A549 (cell line): ENCODE measurements at regions of chr14 and their contacts with region 1.

Region 1: DNA sequence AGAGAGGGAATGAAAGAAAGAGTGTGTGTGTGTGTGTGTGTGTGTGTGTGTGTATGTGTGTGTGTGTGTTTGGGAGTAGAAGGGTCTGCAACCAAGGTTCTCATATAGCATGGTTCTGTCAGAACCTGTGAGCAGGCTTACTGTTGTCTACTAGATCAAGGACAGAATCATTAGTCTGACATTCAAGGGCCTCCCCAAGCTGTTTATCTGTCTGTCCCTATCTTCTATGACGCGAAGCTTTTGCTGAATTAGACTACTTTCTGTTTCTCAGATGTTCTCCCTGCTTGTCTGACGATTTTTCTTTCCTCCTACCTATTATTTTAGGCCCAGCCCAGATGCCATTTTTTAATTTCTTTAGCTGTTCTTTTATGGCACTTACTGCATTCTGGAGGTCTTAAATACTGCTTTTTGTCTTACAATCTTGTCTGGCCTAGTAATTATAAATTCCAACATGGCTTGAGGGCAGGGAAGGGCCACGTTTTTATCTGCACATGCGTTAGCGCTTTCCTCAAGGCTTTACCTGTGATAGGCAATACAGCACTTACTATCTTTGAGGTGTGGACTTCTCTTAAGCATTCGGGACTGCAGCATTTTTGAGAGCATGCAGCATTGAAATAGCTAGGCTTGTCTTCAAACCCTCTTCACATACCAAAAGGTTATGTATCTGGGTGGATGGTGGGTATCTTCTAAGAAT is 150.2 kb downstream of the TTLL5 start:
- DNase-seq: no peak
- ATAC-seq: no peak
- H3K4me3 ChIP-seq: no peak overlapping the region
- H3K27ac ChIP-seq: no peak overlapping the region
- H3K4me1 ChIP-seq: no peaks in the 10 kb centered on the region
- CTCF ChIP-seq: no peak
- EP300 ChIP-seq: no peak
- POLR2A ChIP-seq: no peak
- RAD21 ChIP-seq: no peak

Region 2: DNA sequence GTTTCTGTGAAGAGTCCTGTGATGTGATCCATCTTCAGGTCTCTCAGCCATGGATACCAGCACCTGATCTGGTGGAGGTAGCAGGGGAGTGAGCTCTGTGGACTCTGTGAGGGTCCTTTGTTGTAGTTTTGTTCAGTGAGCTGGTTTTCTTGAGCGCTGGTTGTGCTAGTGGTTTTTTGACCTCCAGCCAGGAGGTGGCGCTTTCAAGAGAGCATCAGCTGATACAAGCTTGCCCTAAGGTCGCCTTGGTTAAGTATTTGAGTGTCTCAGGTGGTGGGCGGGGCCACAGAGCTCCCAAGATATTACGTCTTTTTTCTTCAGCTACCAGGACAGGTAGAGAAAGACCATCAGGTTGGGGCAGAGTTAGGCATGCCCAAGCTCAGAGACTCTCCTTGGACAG is 10.5 kb before region 1 on chr14:
- CTCF ChIA-PET with region 1: interaction called, 10 read pairs
- POLR2A ChIA-PET with region 1: no interaction called
- DNase-seq: peak in 1 of 2 experiments; percentile 4
- ATAC-seq: no peak
- H3K4me3 ChIP-seq: no peak overlapping the region
- H3K27ac ChIP-seq: no peak overlapping the region
- H3K4me1 ChIP-seq: no peaks in the 10 kb centered on the region
- CTCF ChIP-seq: no peak
- EP300 ChIP-seq: no peak
- POLR2A ChIP-seq: no peak
- RAD21 ChIP-seq: no peak

Region 3: GRCh38 chr14:76007852-76008251 is 196.6 kb after region 1 on chr14:
- CTCF ChIA-PET with region 1: no interaction called
- POLR2A ChIA-PET with region 1: no interaction called
- DNase-seq: no peak
- ATAC-seq: no peak
- H3K4me3 ChIP-seq: no peak overlapping the region
- H3K27ac ChIP-seq: no peak overlapping the region
- H3K4me1 ChIP-seq: no peaks in the 10 kb centered on the region
- CTCF ChIP-seq: no peak
- EP300 ChIP-seq: no peak
- POLR2A ChIP-seq: no peak
- RAD21 ChIP-seq: no peak